OCI-LY7 (cell line): ENCODE measurements at regions of chr4 and their contacts with region 1.

Region 1: DNA sequence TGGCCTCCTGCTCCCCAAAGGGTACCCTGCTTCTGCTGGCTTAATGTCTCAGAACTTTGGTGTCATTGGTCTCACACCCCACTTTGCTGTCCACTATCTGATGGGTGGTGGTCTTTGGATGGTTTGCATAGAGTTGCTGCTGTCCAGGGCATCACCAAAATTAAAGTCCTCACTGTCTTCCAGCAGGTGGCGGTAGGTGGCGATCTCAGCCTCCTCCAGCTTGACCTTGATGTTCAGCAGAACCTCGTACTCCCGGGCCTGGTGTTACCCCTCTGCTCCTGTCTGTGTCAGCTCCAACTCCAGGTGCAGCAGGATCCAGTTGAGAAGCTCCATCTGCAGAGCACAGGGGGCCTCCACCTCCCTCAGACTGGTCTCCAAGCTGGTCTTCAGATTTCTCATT is 1169.5 kb upstream of the PABPC4L start:
- DNase-seq: no peak
- H3K4me3 ChIP-seq: no peak overlapping the region
- H3K27ac ChIP-seq: no peak overlapping the region
- H3K4me1 ChIP-seq: no peaks in the 10 kb centered on the region
- CTCF ChIP-seq: peak; percentile 46

Region 2: GRCh38 chr4:135116651-135117050 is 254.5 kb before region 1 on chr4:
- CTCF ChIA-PET with region 1: no interaction called
- POLR2A ChIA-PET with region 1: no interaction called
- intact Hi-C with region 1: no loop called
- DNase-seq: no peak
- H3K4me3 ChIP-seq: no peak overlapping the region
- H3K27ac ChIP-seq: no peak overlapping the region
- H3K4me1 ChIP-seq: no peaks in the 10 kb centered on the region
- CTCF ChIP-seq: no peak

Region 3: GRCh38 chr4:136864580-136865185 is 1493.5 kb after region 1 on chr4:
- CTCF ChIA-PET with region 1: no interaction called
- POLR2A ChIA-PET with region 1: no interaction called
- intact Hi-C with region 1: loop called (anchors 5 kb)
- DNase-seq: peak; percentile 64
- H3K4me3 ChIP-seq: no peak overlapping the region
- H3K27ac ChIP-seq: no peak overlapping the region
- H3K4me1 ChIP-seq: no peaks in the 10 kb centered on the region
- CTCF ChIP-seq: peak; percentile 93